ENCODE measurements at regions of chrX and their contacts with region 1.

Region 1: GRCh38 chrX:102599084-102599950 is at the start of gene ARMCX5:
- DNase-seq: peak; percentile 80
- ATAC-seq: peak; percentile 98
- H3K4me3 ChIP-seq: peak within 1 kb of the TSS; percentile 87 to 99
- H3K27ac ChIP-seq: peak within 1 kb of the TSS; percentile 97
- H3K4me1 ChIP-seq: peaks cover 3% of the 10 kb centered on the region; the same call in 1 of the 2 replicates
- H3K27me3 ChIP-seq: no peaks in the 10 kb centered on the region
- CTCF ChIP-seq: no peak
- total RNA-seq, gene ARMCX5: 23.2 TPM

Region 2: DNA sequence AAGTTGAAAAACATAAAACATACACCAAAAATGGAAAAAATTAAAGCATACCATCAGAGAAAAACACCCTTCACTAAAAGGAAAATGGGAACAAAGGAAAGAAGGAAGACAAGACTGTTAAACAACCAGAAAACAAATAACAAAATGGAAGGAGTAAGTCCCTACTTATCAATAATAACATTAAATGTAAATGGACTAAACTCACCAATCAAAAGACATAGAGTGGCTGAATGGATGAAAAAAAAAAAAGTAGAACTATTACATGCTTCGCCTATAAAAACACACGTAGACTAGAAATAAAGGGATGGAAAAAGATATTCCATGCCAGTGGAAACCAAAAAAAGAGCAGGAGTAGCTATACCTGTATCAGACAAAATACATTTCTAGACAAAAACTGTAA is 63.4 kb before region 1 on chrX:
- CTCF ChIA-PET with region 1: no interaction called
- POLR2A ChIA-PET with region 1: no interaction called
- in situ Hi-C with region 1: no loop called
- intact Hi-C with region 1: loop called (anchors 10 kb)
- DNase-seq: no peak
- ATAC-seq: no peak
- H3K4me3 ChIP-seq: no peak overlapping the region
- H3K27ac ChIP-seq: no peak overlapping the region
- H3K4me1 ChIP-seq: no peaks in the 10 kb centered on the region
- H3K27me3 ChIP-seq: no peaks in the 10 kb centered on the region
- CTCF ChIP-seq: no peak

Region 3: GRCh38 chrX:102712952-102713625 is 113.8 kb after region 1 on chrX:
- CTCF ChIA-PET with region 1: no interaction called
- POLR2A ChIA-PET with region 1: no interaction called
- in situ Hi-C with region 1: no loop called
- intact Hi-C with region 1: loop called (anchors 5 kb)
- DNase-seq: peak; percentile 13
- ATAC-seq: peak; percentile 85
- H3K4me3 ChIP-seq: peak overlapping the region; percentile 63 to 85
- H3K27ac ChIP-seq: no peak overlapping the region; the same call in 1 of the 2 replicates
- H3K4me1 ChIP-seq: no peaks in the 10 kb centered on the region
- H3K27me3 ChIP-seq: no peaks in the 10 kb centered on the region
- CTCF ChIP-seq: peak; percentile 84

Region 4: DNA sequence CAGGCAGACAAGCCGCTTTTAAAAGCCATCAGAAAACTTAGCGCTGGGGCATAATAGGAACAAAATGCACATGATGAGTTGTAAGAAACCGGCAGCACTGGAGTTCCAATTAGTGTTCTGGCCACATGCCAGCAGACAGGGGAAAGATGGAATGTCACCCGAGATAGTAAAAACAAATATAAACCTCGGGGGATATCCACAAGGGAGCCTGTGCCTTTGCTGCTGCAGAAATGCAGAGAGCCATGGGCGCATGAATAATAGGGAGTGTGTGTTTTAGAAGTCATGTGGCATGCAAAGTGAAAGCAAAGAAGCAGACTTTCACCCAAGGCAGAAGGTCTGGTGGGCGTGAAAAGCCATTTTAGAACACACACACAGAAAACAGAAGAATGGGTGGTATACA is 140.3 kb after region 1 on chrX:
- CTCF ChIA-PET with region 1: no interaction called
- POLR2A ChIA-PET with region 1: no interaction called
- in situ Hi-C with region 1: no loop called
- intact Hi-C with region 1: no loop called
- DNase-seq: no peak
- ATAC-seq: no peak
- H3K4me3 ChIP-seq: no peak overlapping the region
- H3K27ac ChIP-seq: no peak overlapping the region
- H3K4me1 ChIP-seq: no peaks in the 10 kb centered on the region
- H3K27me3 ChIP-seq: no peaks in the 10 kb centered on the region
- CTCF ChIP-seq: no peak

Region 5: DNA sequence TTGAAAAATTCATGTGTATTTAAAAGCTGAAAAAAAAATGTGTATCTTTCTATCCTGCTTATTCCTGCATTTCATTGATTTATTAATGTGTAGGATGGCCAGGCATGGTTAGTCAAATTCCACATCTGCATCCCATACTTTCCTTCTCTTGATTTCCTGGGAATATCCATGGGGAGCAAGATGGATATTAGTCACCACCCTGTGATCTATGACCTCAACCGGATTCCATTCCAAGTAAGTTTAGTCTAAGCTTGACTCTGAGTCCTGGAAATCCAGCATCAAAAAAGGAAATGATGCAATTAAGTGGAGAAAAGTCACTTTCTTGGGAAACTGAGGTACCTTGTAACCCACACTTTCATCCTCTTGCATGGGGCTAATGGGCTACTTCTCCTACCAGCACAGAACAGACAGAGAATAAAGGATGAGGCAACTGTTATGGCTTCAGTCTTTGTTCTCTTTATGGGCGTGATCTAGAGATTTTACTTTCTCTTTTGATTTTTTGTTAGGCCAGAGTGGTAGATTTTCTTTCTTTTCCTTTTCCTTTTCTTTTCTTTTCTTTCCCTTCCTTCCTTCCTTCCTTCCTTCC is 598.5 kb after region 1 on chrX:
- CTCF ChIA-PET with region 1: no interaction called
- POLR2A ChIA-PET with region 1: no interaction called
- in situ Hi-C with region 1: no loop called
- intact Hi-C with region 1: no loop called
- DNase-seq: no peak
- ATAC-seq: no peak
- H3K4me3 ChIP-seq: no peak overlapping the region
- H3K27ac ChIP-seq: no peak overlapping the region
- H3K4me1 ChIP-seq: no peaks in the 10 kb centered on the region
- H3K27me3 ChIP-seq: no peaks in the 10 kb centered on the region
- CTCF ChIP-seq: no peak